ENCODE measurements at regions of chr7 and their contacts with region 1.

Region 1: DNA sequence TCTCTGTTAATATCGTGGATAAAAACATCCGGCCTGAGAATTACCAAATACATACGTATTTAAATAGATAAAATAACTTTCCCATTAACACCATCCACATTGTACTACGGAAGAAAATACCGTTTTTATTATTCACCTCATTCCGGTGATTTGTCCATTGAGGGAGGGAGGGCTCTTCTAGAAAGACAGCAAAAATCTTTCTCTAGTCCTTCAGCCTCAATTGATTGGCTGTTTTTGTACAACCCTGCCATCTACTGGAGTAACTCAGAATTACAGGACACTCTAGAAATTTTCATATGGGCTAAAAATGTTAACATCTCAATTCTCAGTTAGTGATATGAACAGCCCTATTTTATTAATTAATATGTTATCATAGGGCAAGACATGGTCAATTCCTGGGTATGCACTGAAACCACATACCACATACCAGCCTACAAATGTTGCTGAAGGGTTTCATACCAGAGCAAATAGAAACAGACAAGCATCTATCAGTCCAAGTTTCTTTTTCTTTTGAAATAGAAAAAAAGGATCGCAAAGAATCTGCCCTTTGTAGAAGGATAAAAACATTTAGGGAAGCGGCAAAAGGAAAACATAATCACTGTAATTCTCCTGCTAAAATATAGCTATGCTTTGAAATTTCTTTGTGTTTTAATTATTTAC is 55.8 kb upstream of the CDCA7L start:
- DNase-seq: peak; percentile 86
- H3K4me3 ChIP-seq: no peak overlapping the region
- H3K27ac ChIP-seq: peak overlapping the region; percentile 59
- H3K4me1 ChIP-seq: peaks cover 16% of the 10 kb centered on the region
- H3K27me3 ChIP-seq: no peaks in the 10 kb centered on the region
- CTCF ChIP-seq: peak; percentile 51 to 60
- POLR2A ChIP-seq: no peak

Region 2: GRCh38 chr7:21086688-21087087 is 914.8 kb before region 1 on chr7:
- CTCF ChIA-PET with region 1: no interaction called
- POLR2A ChIA-PET with region 1: no interaction called
- dilution Hi-C with region 1: no loop called
- intact Hi-C with region 1: no loop called
- DNase-seq: peak; percentile 23
- H3K4me3 ChIP-seq: no peak overlapping the region
- H3K27ac ChIP-seq: no peak overlapping the region
- H3K4me1 ChIP-seq: no peaks in the 10 kb centered on the region
- H3K27me3 ChIP-seq: no peaks in the 10 kb centered on the region
- CTCF ChIP-seq: no peak
- POLR2A ChIP-seq: no peak

Region 3: GRCh38 chr7:21253740-21254687 is 747.5 kb before region 1 on chr7:
- CTCF ChIA-PET with region 1: interaction called, 8 read pairs
- POLR2A ChIA-PET with region 1: no interaction called
- dilution Hi-C with region 1: no loop called
- intact Hi-C with region 1: loop called (anchors 1 kb)
- DNase-seq: peak; percentile 78
- H3K4me3 ChIP-seq: no peak overlapping the region
- H3K27ac ChIP-seq: no peak overlapping the region
- H3K4me1 ChIP-seq: no peaks in the 10 kb centered on the region
- H3K27me3 ChIP-seq: peaks cover 28 to 67% of the 10 kb centered on the region in 2 experiments
- CTCF ChIP-seq: peak; percentile 52 to 72
- POLR2A ChIP-seq: no peak

Region 4: DNA sequence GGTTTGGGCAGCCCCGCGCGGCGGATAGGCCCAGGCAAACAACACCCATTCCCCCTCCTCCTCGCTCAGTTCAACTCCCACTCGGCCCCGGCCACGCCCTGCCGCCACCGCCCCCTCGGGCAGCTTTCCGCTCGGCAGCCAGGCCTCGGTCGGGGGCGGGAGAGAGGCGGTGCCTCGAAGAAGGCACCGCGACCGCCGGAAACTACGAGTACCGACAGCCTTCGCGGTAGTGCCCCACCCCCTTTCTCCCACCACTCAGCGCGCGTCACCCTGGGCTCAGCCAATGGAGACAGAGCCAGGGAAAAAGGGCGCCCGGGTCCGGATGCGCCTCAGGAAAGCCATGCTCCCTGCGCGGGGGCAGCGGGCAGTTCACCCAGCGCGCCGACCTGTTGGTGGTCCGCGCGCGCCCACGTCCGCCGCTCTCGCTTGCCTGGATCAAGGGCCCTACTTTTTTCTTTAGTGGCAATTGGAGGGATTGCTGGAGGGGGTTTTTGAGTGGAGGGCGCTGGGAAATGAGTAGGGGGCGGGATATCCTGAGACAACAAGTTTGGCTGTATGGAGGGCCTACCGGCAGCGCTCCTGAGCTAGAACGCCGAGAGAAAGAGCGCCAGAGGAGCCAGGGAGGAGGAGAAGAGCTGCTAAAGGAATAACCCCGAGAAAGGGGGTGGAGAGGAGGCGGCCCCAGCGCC is 574.1 kb before region 1 on chr7:
- CTCF ChIA-PET with region 1: no interaction called
- POLR2A ChIA-PET with region 1: no interaction called
- dilution Hi-C with region 1: no loop called
- intact Hi-C with region 1: loop called (anchors 1 kb)
- DNase-seq: peak; percentile 99
- H3K4me3 ChIP-seq: peak overlapping the region; percentile 54 to 65 (median 55)
- H3K27ac ChIP-seq: peak overlapping the region; percentile 89
- H3K4me1 ChIP-seq: peaks cover 17% of the 10 kb centered on the region
- H3K27me3 ChIP-seq: no peaks in the 10 kb centered on the region
- CTCF ChIP-seq: no peak
- POLR2A ChIP-seq: peak; percentile 59

Region 5: DNA sequence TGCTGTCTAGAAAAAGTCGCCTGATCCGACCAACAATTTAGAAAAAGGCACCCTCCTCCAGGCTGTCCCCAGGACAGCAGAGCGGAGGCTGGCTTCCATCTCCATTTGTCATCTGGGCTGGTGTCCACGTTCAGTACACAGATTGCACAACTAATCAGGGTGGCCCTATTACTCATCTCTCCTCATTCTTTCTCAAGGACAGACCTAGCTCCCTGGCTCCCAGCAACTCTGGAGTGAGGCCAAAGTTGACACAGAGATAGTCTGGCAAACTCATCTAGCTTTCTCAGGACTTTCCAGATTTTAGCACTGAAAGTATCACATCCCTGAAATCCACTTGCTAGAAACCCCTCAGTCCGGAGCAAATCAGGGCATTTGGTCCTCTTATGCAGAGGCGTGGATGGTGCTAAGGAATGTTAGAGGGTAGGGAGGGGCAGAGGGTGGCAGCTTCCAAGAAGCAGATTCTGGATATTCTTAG is 383.5 kb before region 1 on chr7:
- CTCF ChIA-PET with region 1: no interaction called
- POLR2A ChIA-PET with region 1: no interaction called
- dilution Hi-C with region 1: no loop called
- intact Hi-C with region 1: loop called (anchors 1 kb)
- DNase-seq: peak; percentile 30
- H3K4me3 ChIP-seq: no peak overlapping the region
- H3K27ac ChIP-seq: peak overlapping the region; percentile 84
- H3K4me1 ChIP-seq: peaks cover 21% of the 10 kb centered on the region
- H3K27me3 ChIP-seq: no peaks in the 10 kb centered on the region
- CTCF ChIP-seq: no peak
- POLR2A ChIP-seq: no peak

Region 6: GRCh38 chr7:21850531-21851285 is 150.8 kb before region 1 on chr7:
- CTCF ChIA-PET with region 1: no interaction called
- POLR2A ChIA-PET with region 1: no interaction called
- dilution Hi-C with region 1: no loop called
- intact Hi-C with region 1: loop called (anchors 2 kb)
- DNase-seq: peak; percentile 48
- H3K4me3 ChIP-seq: peak overlapping the region in 1 of 3 experiments; percentile 34
- H3K27ac ChIP-seq: peak overlapping the region; percentile 76
- H3K4me1 ChIP-seq: peaks cover 26% of the 10 kb centered on the region
- H3K27me3 ChIP-seq: no peaks in the 10 kb centered on the region
- CTCF ChIP-seq: no peak
- POLR2A ChIP-seq: no peak

Region 7: DNA sequence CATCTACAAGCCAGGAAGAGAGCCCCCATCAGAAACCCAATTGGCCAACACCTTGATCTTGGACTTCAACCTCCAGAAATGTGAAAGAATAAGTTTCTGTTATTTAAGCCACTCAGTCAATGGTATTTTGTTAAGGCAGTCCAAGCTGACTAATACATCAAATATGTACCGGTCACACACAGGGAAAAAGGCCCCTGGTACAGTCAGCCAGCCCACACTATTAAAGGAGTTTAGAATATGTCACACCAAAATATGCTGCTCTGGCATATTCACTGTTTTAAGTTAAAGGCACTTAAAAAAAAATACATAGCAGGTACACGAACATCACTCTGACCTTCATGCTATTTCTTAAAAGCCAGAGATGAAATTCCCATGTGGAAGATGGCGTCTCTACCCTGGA is 40.6 kb before region 1 on chr7:
- CTCF ChIA-PET with region 1: no interaction called
- POLR2A ChIA-PET with region 1: no interaction called
- dilution Hi-C with region 1: no loop called
- intact Hi-C with region 1: no loop called
- DNase-seq: peak; percentile 80
- H3K4me3 ChIP-seq: no peak overlapping the region
- H3K27ac ChIP-seq: peak overlapping the region; percentile 41
- H3K4me1 ChIP-seq: peaks cover 10% of the 10 kb centered on the region
- H3K27me3 ChIP-seq: no peaks in the 10 kb centered on the region
- CTCF ChIP-seq: no peak
- POLR2A ChIP-seq: no peak

Region 8: DNA sequence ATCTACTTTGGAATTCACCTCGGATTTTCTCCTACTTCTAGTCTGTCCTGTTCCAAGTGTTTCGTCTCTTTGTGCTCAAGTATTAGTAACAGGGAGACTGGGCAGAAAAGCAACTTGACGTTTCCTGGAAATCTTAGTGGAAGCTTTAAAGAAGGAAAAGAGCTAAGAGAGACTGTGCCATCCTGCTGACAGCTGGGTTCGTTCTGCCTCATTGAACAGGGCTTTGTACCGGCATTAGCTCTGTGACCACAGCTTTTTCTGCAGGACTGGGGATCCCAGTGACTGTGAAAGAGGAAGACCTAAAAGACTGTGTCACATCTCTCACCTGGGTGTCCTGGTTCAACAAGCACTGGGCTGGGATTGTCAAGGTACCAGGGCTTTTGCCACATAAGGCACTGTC is 15.0 kb after region 1 on chr7:
- CTCF ChIA-PET with region 1: no interaction called
- POLR2A ChIA-PET with region 1: no interaction called
- dilution Hi-C with region 1: no loop called
- intact Hi-C with region 1: no loop called
- DNase-seq: no peak
- H3K4me3 ChIP-seq: no peak overlapping the region
- H3K27ac ChIP-seq: no peak overlapping the region
- H3K4me1 ChIP-seq: no peaks in the 10 kb centered on the region
- H3K27me3 ChIP-seq: peaks cover 4% of the 10 kb centered on the region in 2 experiments
- CTCF ChIP-seq: no peak
- POLR2A ChIP-seq: no peak

Region 9: GRCh38 chr7:22082886-22083703 is 81.6 kb after region 1 on chr7:
- CTCF ChIA-PET with region 1: interaction called, 4 read pairs
- POLR2A ChIA-PET with region 1: no interaction called
- dilution Hi-C with region 1: no loop called
- intact Hi-C with region 1: loop called (anchors 1 kb)
- DNase-seq: peak; percentile 86
- H3K4me3 ChIP-seq: peak overlapping the region; percentile 22 to 69 (median 66)
- H3K27ac ChIP-seq: peak overlapping the region; percentile 6
- H3K4me1 ChIP-seq: peaks cover 11% of the 10 kb centered on the region
- H3K27me3 ChIP-seq: peaks cover 10 to 19% of the 10 kb centered on the region in 2 experiments
- CTCF ChIP-seq: peak; percentile 98 to 99
- POLR2A ChIP-seq: peak; percentile 69